PC-9 (cell line): ENCODE measurements at regions of chr7 and their contacts with region 1.

Region 1: DNA sequence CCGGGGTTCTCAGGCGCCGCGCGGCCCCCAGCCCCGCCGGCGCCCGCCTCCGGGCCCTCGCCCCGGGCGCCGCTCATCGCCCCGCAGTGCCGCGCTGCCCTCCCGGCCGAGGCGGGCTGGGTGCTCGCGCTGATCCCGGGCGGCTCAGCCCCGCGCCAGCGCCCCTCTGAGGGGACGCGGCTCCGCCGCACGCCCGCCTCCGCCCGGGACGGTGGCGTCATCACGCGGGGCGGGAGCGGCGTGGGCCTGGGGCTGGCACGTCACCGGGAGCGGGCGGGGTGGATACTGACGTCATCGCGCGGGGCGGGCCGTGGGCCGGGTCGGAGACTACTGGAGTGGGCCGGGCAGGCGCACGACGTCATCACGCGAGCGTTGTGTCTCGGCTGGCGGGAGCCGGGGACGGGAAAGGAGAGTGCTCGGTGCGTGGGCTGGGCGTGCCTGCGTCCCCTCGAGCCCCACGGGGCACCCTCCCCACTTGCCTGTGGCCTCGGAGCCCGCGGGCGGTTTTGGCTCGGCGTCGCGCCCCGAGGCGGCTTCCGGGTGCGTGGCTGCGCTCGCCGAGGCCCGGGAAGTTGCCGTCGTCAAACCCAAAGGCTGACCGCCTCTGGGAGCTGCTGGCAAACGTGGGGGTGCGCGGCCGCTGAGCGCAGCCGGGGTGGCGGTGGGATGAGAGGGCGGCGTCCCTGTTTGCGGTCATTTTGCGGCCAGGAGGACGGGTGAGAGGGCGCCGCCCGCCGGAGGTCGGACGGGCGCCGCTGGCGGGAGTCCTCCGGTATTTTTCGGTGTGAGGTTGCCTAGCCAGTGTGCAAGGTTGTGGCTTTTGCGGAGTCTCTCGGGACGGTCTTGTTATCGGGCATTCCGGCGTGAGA is at the start of gene ESYT2:
- DNase-seq: peak; percentile 90 to 99
- H3K4me3 ChIP-seq: peak within 1 kb of the TSS; percentile 84
- H3K27ac ChIP-seq: peak within 1 kb of the TSS; percentile 89
- H3K4me1 ChIP-seq: peaks cover 34% of the 10 kb centered on the region
- H3K27me3 ChIP-seq: no peaks in the 10 kb centered on the region
- CTCF ChIP-seq: peak; percentile 12; the same call in 1 of the 2 replicates
- total RNA-seq, gene ESYT2: 124 and 162 TPM in 2 replicates

Region 2: GRCh38 chr7:158704704-158705468 is 124.7 kb before region 1 on chr7 and contains the start of gene NCAPG2:
- CTCF ChIA-PET with region 1: no interaction called
- POLR2A ChIA-PET with region 1: no interaction called
- intact Hi-C with region 1: loop called (anchors 1 kb)
- DNase-seq: peak; percentile 97 to 99
- H3K4me3 ChIP-seq: peak within 1 kb of the TSS; percentile 70
- H3K27ac ChIP-seq: peak within 1 kb of the TSS; percentile 50
- H3K4me1 ChIP-seq: peaks cover 33% of the 10 kb centered on the region
- H3K27me3 ChIP-seq: no peaks in the 10 kb centered on the region
- CTCF ChIP-seq: no peak; the same call in 1 of the 2 replicates
- total RNA-seq, gene NCAPG2: 99.5 and 124 TPM in 2 replicates

Region 3: DNA sequence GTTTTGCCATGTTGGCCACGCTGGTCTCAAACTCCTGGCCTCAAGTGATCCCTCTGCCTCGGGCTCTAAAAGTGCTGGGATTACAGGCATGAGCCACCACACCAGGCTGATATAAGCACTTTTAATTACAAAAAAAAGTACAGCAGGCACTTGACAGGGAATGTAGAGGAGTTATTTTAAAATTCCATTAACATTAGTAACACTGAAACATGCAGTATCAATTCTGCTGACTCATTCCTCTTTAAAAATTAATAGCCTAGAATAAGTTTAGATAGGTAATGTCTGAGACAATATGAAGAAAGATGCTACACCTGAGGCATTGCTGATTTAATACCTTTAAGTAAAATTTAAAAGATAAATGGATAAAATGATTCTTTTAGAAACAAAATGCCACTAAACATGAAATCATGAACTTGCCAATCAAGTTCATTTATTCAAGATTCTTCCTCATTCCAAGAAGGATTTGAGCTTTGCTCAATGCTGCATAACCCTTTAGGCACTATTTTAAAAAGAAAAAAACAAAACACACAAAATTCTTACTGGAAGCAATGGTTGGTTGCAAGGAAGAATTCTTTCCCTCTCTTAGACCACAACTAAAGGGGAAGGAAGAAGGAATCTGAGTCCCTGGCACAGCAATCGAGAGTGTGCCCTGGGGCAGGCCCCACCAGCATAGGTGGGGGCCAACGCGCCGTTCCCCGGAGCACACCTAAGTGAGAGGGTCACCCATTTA is 26.9 kb before region 1 on chr7:
- CTCF ChIA-PET with region 1: no interaction called
- POLR2A ChIA-PET with region 1: interaction called, 27 read pairs
- intact Hi-C with region 1: loop called (anchors 1 kb)
- DNase-seq: peak; percentile 78 to 99
- H3K4me3 ChIP-seq: peak overlapping the region; percentile 35
- H3K27ac ChIP-seq: peak overlapping the region; percentile 97
- H3K4me1 ChIP-seq: peaks cover 59% of the 10 kb centered on the region
- H3K27me3 ChIP-seq: no peaks in the 10 kb centered on the region
- CTCF ChIP-seq: no peak

Region 4: GRCh38 chr7:158809596-158809995 is 20.0 kb before region 1 on chr7:
- CTCF ChIA-PET with region 1: no interaction called
- POLR2A ChIA-PET with region 1: interaction called, 27 read pairs
- intact Hi-C with region 1: no loop called
- DNase-seq: no peak
- H3K4me3 ChIP-seq: no peak overlapping the region
- H3K27ac ChIP-seq: 0 out of 2 replicates have a peak overlapping the region, but pooled peaks have one; percentile 2
- H3K4me1 ChIP-seq: peaks cover 49% of the 10 kb centered on the region
- H3K27me3 ChIP-seq: no peaks in the 10 kb centered on the region
- CTCF ChIP-seq: no peak

Region 5: GRCh38 chr7:158856883-158857668 is 27.5 kb after region 1 on chr7:
- CTCF ChIA-PET with region 1: no interaction called
- POLR2A ChIA-PET with region 1: interaction called, 7 read pairs
- intact Hi-C with region 1: loop called (anchors 1 kb)
- DNase-seq: no peak
- H3K4me3 ChIP-seq: peak overlapping the region; percentile 95
- H3K27ac ChIP-seq: no peak overlapping the region
- H3K4me1 ChIP-seq: peaks cover 40% of the 10 kb centered on the region
- H3K27me3 ChIP-seq: no peaks in the 10 kb centered on the region
- CTCF ChIP-seq: no peak